ENCODE measurements at regions of chr10 and their contacts with region 1.

Region 1: GRCh38 chr10:103752680-103753248 is 102.6 kb downstream of the SH3PXD2A start:
- DNase-seq: peak; percentile 66
- ATAC-seq: no peak
- H3K4me3 Mint-ChIP-seq: no peak overlapping the region
- H3K27ac Mint-ChIP-seq: no peak overlapping the region
- H3K4me1 Mint-ChIP-seq: peaks cover 13% of the 10 kb centered on the region
- H3K27me3 Mint-ChIP-seq: no peaks in the 10 kb centered on the region; the same call in 1 of the 2 replicates
- CTCF ChIP-seq: peak; percentile 91

Region 2: DNA sequence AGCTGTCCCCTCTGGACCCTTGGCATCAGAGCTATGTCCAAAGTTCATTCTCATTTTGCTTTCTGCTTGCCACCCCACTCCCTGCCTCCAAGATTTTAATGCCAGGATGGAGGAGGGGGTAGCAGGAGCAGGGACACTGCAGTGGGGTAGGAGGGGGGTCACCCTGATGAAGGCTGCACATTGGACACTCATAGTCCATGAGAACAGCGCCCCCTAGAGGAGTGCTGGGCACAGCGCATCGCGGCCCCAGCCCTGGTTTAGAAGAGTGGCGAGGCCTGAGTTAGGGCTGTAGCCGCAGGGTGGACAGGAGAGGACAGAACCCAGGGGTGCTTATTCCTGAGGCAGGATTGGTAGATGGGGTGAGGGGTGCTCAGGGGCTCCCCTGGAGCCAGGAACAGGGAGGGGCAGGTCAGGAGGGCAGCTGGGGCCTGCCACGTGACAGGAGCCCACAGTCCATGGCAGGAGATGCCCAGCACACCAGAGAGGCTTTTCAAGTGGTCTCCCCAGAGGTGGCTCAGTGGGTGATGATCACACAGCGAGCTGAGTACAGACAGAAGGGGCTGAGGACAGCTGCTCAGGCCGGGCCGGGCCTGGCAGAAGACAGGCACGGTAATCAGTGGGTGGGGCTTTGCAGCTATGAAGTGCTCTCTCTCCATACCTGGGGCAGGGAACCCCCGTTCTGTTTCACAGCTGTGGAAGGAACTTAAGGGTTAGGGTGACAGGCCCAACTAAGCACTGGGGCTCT is 187.8 kb before region 1 on chr10:
- CTCF ChIA-PET with region 1: no interaction called
- POLR2A ChIA-PET with region 1: no interaction called
- DNase-seq: peak; percentile 87
- ATAC-seq: peak; percentile 93
- H3K4me3 Mint-ChIP-seq: no peak overlapping the region
- H3K27ac Mint-ChIP-seq: no peak overlapping the region
- H3K4me1 Mint-ChIP-seq: no peaks in the 10 kb centered on the region
- H3K27me3 Mint-ChIP-seq: no peaks in the 10 kb centered on the region; the same call in 1 of the 2 replicates
- CTCF ChIP-seq: peak; percentile 99

Region 3: GRCh38 chr10:103731609-103732270 is 21.0 kb before region 1 on chr10:
- CTCF ChIA-PET with region 1: interaction called, 21 read pairs
- POLR2A ChIA-PET with region 1: interaction called, 3 read pairs
- DNase-seq: no peak
- ATAC-seq: no peak
- H3K4me3 Mint-ChIP-seq: no peak overlapping the region
- H3K27ac Mint-ChIP-seq: peak overlapping the region; percentile 29; the same call in 1 of the 2 replicates
- H3K4me1 Mint-ChIP-seq: peaks cover 42% of the 10 kb centered on the region
- H3K27me3 Mint-ChIP-seq: no peaks in the 10 kb centered on the region
- CTCF ChIP-seq: no peak

Region 4: GRCh38 chr10:103772096-103772845 is 19.5 kb after region 1 on chr10:
- CTCF ChIA-PET with region 1: interaction called, 11 read pairs
- POLR2A ChIA-PET with region 1: interaction called, 4 read pairs
- DNase-seq: peak; percentile 87
- ATAC-seq: peak; percentile 92
- H3K4me3 Mint-ChIP-seq: peak overlapping the region; percentile 85
- H3K27ac Mint-ChIP-seq: peak overlapping the region; percentile 99
- H3K4me1 Mint-ChIP-seq: peaks cover 34% of the 10 kb centered on the region
- H3K27me3 Mint-ChIP-seq: no peaks in the 10 kb centered on the region
- CTCF ChIP-seq: no peak